ENCODE measurements at regions of chr5 and their contacts with region 1.

Region 1: DNA sequence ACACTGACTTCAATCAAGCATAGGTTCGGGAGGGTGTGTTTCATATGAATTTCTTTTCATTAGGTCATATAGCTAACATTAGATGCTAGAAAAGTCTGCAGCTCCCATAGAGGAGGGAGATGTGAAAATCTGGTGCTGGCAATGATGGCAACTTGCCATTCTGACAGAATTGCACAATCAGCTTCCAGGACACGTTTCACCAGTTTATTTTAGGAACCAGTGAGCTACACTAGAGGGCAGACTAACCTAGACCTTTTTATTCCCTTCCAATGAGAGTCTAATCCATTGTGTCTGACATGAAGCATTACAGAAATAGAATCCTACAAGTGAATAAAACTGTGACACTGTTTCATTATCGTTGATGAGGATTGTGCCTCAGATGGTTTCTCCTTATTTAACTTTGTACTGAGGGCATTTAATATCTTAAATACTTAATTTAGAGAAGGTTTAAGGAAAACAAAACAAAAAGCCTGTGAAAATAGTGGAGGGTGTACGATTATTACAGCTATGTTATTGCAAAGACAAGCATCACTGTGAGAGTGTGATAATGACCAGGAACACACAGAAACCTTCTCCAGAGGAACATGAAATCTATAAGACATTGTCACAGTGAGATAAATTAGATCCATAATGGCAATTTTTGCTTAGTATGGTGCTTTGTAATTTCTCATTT is 363.3 kb upstream of the RPS23 start:
- DNase-seq: peak in 1 of 2 donors; percentile 54
- ATAC-seq: peak; percentile 62 to 90 (median 71)
- H3K4me3 ChIP-seq: no peak overlapping the region
- H3K4me3 Mint-ChIP-seq: no peak overlapping the region
- H3K27ac ChIP-seq: no peak overlapping the region
- H3K27ac Mint-ChIP-seq: no peak overlapping the region
- H3K4me1 ChIP-seq: no peaks in the 10 kb centered on the region
- H3K4me1 Mint-ChIP-seq: peaks cover 4 to 7% of the 10 kb centered on the region in 2 donors
- H3K27me3 ChIP-seq: no peaks in the 10 kb centered on the region
- H3K27me3 Mint-ChIP-seq: no peaks in the 10 kb centered on the region
- CTCF ChIP-seq: peak; percentile 67

Region 2: DNA sequence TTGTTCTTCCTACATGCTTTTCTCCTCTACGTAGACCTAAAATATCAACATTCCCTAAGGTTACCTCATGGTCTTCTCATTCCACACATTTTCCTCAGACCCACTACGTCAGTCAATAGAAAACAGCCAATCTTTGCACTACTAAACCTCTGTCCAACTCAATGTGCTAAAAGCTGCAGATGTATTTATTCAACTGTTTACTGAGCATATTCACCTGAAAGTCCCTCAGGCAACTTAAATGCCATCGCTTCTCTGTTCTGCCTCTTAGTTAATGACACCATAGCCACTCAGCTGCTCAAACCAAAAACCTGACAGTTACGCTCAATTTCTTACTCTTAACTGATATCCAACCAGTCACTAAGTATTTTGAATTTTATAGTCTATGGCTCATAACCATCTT is 965.6 kb before region 1 on chr5:
- intact Hi-C with region 1: no loop called
- DNase-seq: no peak
- ATAC-seq: no peak
- H3K4me3 ChIP-seq: no peak overlapping the region
- H3K4me3 Mint-ChIP-seq: no peak overlapping the region
- H3K27ac ChIP-seq: no peak overlapping the region
- H3K27ac Mint-ChIP-seq: no peak overlapping the region
- H3K4me1 ChIP-seq: no peaks in the 10 kb centered on the region
- H3K4me1 Mint-ChIP-seq: no peaks in the 10 kb centered on the region
- H3K27me3 ChIP-seq: no peaks in the 10 kb centered on the region
- H3K27me3 Mint-ChIP-seq: no peaks in the 10 kb centered on the region
- CTCF ChIP-seq: no peak

Region 3: GRCh38 chr5:82605441-82605973 is 36.0 kb before region 1 on chr5:
- intact Hi-C with region 1: no loop called
- DNase-seq: no peak
- ATAC-seq: no peak
- H3K4me3 ChIP-seq: no peak overlapping the region
- H3K4me3 Mint-ChIP-seq: no peak overlapping the region
- H3K27ac ChIP-seq: no peak overlapping the region
- H3K27ac Mint-ChIP-seq: no peak overlapping the region
- H3K4me1 ChIP-seq: no peaks in the 10 kb centered on the region
- H3K4me1 Mint-ChIP-seq: no peaks in the 10 kb centered on the region
- H3K27me3 ChIP-seq: no peaks in the 10 kb centered on the region
- H3K27me3 Mint-ChIP-seq: peaks cover 0 to 5% of the 10 kb centered on the region in 2 donors
- CTCF ChIP-seq: no peak

Region 4: DNA sequence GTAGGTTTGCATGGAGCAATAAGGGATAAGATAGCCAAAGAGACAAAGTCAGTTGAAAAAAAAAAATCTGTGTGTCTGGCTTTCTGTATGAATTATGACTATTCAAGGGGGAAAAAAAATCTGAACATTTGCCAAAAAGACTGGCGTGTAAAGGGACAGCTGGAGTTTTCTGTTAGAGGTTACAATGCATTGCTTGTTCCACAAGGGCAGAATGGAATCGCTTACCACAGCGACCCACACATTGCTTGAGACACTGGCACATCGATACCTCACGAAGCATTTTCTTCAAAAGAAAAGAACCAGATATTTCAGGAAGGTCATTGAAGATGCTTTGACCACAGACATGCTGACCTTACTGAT is 108.0 kb after region 1 on chr5:
- intact Hi-C with region 1: no loop called
- DNase-seq: no peak
- ATAC-seq: no peak
- H3K4me3 ChIP-seq: no peak overlapping the region
- H3K4me3 Mint-ChIP-seq: no peak overlapping the region
- H3K27ac ChIP-seq: no peak overlapping the region
- H3K27ac Mint-ChIP-seq: no peak overlapping the region
- H3K4me1 ChIP-seq: peaks cover 6% of the 10 kb centered on the region
- H3K4me1 Mint-ChIP-seq: peaks cover 22 to 27% of the 10 kb centered on the region in 2 donors
- H3K27me3 ChIP-seq: no peaks in the 10 kb centered on the region
- H3K27me3 Mint-ChIP-seq: no peaks in the 10 kb centered on the region
- CTCF ChIP-seq: no peak

Region 5: DNA sequence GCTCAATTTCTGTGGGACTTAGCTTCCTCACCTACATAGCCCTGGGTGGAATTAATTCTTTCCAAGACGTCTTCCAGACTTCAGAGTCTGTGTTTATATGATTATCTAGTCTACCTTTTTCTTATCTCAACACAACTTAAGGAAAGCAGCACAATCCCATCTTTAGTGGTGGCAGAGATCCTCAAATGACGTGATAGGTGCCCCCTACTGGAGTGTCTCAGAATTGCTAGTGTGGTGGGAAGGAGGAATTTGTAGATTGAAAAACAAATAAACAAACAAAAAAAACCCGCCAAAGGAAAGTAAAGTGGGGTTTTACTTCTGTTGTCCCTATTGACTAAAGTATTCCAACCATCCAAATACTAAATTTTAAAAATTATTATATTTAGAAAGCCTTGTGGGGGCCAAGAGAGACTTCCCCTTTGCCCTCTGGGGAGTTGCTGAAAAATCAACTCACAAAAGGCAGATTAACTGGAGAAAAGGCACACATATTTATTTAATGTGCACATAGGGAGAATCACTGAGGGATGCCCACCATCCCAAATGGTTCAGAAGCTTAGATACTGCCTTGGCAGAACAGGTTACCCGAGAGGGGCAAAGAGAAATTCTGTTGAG is 152.4 kb after region 1 on chr5:
- intact Hi-C with region 1: loop called (anchors 1 kb)
- DNase-seq: peak in 1 of 2 donors; percentile 60
- ATAC-seq: peak in 1 of 3 donors; percentile 66
- H3K4me3 ChIP-seq: no peak overlapping the region
- H3K4me3 Mint-ChIP-seq: no peak overlapping the region
- H3K27ac ChIP-seq: no peak overlapping the region
- H3K27ac Mint-ChIP-seq: no peak overlapping the region
- H3K4me1 ChIP-seq: no peaks in the 10 kb centered on the region
- H3K4me1 Mint-ChIP-seq: no peaks in the 10 kb centered on the region
- H3K27me3 ChIP-seq: no peaks in the 10 kb centered on the region
- H3K27me3 Mint-ChIP-seq: peaks cover 0 to 12% of the 10 kb centered on the region in 2 donors
- CTCF ChIP-seq: peak; percentile 92

Region 6: DNA sequence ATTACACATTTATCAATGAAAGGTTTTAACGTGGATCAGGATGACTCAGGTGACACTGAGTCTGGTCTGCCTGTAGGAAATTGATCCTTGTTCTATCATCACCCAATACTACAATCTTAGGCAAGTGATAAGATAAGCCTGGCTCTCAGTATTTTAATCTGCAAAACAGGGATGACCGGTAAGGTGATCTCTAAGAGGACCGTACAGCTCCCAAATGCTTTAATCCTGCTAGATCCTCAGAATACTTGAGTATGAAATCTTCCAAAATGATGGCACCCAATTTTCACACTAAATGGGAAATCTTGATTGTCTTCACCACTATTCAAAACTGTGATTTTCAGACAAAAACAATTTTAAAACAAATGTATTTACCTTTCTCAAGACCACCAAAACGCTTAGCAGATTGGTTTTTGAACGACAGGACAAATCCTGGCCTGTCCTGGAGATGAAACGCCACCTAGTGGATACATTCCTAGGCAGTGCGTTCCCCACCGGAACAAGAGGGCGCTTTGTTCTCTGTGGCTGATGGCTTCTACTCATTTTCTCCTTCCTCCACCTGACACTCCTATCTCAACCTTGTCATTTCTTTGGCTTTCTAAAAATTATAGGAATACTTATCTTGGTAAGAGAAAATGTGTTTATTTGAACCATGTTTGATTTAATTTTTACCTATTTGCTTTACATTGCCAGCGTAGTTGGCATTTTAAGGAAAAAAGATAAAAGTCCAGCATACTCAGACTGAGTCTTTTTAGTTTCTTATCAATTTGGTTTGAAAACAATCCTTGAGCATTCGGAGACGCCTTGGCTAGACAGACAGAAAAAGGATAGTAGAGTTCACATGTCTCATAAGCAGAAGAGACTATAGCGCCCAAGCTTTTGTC is 788.9 kb after region 1 on chr5:
- intact Hi-C with region 1: loop called (anchors 1 kb)
- DNase-seq: peak in 1 of 2 donors; percentile 71
- ATAC-seq: peak in 2 of 3 donors; percentile 77 to 81
- H3K4me3 ChIP-seq: no peak overlapping the region
- H3K4me3 Mint-ChIP-seq: no peak overlapping the region
- H3K27ac ChIP-seq: no peak overlapping the region
- H3K27ac Mint-ChIP-seq: no peak overlapping the region
- H3K4me1 ChIP-seq: no peaks in the 10 kb centered on the region
- H3K4me1 Mint-ChIP-seq: no peaks in the 10 kb centered on the region
- H3K27me3 ChIP-seq: no peaks in the 10 kb centered on the region
- H3K27me3 Mint-ChIP-seq: no peaks in the 10 kb centered on the region
- CTCF ChIP-seq: peak; percentile 65

Region 7: DNA sequence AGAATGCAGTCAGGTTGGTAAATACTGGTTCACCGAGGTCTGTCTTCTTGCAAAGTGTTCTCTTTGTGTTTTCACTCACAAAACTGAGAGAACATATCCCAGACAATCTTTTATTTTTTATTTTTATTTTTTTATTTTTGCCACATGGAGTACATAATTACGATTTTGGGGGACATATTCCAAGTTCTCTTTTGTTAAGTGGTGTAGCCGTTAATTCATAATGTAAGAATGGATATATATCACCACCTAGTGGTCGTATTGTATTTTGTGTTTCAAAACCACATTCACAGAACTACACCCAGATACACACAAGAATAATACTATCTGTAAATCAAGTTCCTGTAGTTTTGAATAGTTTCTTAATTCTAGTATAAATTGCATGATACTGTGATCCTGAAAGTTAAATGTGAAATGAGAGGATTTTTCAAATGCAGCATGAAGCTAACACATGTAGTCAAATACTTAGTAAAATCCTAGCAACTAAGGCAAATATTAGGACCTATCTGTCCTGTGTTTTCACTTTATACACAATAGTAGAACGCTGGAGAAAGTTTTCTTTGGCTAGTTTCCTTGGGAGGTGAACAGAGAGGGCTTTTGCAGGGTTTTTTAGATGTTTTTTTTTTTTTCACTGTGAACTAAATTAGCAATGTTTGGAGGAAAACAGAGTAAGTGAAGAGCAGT is 922.7 kb after region 1 on chr5:
- intact Hi-C with region 1: loop called (anchors 1 kb)
- DNase-seq: peak in 1 of 2 donors; percentile 58
- ATAC-seq: peak in 1 of 3 donors; percentile 52
- H3K4me3 ChIP-seq: no peak overlapping the region
- H3K4me3 Mint-ChIP-seq: no peak overlapping the region
- H3K27ac ChIP-seq: no peak overlapping the region
- H3K27ac Mint-ChIP-seq: no peak overlapping the region
- H3K4me1 ChIP-seq: no peaks in the 10 kb centered on the region
- H3K4me1 Mint-ChIP-seq: no peaks in the 10 kb centered on the region
- H3K27me3 ChIP-seq: no peaks in the 10 kb centered on the region
- H3K27me3 Mint-ChIP-seq: peaks cover 5 to 37% of the 10 kb centered on the region in 2 donors
- CTCF ChIP-seq: peak; percentile 55

Measured in natural killer cell (primary cell).